GM12878 (cell line): ENCODE measurements at regions of chr17 and their contacts with region 1.

Region 1: GRCh38 chr17:31508288-31509094 is 117.0 kb downstream of the RAB11FIP4 start:
- DNase-seq: peak; percentile 69
- ATAC-seq: peak; percentile 86
- H3K4me3 ChIP-seq: peak overlapping the region; percentile 55
- H3K27ac ChIP-seq: peak overlapping the region; percentile 91
- H3K4me1 ChIP-seq: peaks cover 27% of the 10 kb centered on the region
- H3K27me3 ChIP-seq: no peaks in the 10 kb centered on the region
- CTCF ChIP-seq: peak; percentile 47 to 63 (median 61)
- EP300 ChIP-seq: no peak
- POLR2A ChIP-seq: peak; percentile 60
- RAD21 ChIP-seq: peak; percentile 60

Region 2: DNA sequence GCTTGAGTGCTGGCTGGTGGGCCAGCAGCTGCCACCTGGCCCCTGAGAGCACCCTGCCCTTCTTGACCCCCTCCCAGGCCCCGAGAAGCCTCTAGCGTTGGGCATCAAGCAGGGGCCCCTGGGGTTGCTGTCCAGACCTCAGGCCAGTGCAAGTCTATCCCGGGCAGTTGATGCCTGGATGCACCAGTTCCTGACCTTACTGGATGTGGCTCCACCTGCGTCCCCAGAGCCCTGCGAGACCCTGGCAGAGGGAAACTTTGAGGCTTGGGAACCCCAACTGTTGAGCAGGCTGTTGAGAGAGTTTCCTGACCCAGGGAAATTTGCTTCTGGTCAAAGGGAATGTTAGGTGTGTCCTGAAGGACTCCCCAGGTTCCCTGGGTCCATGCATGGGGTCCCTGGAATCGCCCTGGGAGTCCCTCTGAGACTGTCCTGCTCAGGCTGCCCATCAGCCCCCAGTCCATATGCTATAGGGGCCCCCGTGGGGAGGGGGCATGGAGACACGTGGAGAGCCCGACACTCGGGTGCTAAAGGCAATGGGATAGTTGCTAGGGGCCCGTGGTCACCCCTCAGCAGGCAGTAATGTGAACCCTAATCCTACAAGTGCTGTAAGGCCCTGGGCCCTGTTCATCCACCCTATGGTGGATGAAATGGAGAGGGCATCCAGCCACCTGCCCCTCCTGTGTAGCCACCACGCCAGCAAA is 70.6 kb before region 1 on chr17:
- CTCF ChIA-PET with region 1: interaction called, 15 read pairs
- POLR2A ChIA-PET with region 1: interaction called, 5 read pairs
- RAD21 ChIA-PET with region 1: interaction called, 7 read pairs
- SMC1A ChIA-PET with region 1: interaction called, 10 read pairs
- in situ Hi-C with region 1: no loop called
- intact Hi-C with region 1: no loop called
- DNase-seq: no peak
- ATAC-seq: no peak; the same call in 2 of the 3 replicates
- H3K4me3 ChIP-seq: no peak overlapping the region
- H3K27ac ChIP-seq: no peak overlapping the region
- H3K4me1 ChIP-seq: no peaks in the 10 kb centered on the region
- H3K27me3 ChIP-seq: no peaks in the 10 kb centered on the region
- CTCF ChIP-seq: no peak
- EP300 ChIP-seq: no peak
- POLR2A ChIP-seq: no peak
- RAD21 ChIP-seq: no peak

Region 3: DNA sequence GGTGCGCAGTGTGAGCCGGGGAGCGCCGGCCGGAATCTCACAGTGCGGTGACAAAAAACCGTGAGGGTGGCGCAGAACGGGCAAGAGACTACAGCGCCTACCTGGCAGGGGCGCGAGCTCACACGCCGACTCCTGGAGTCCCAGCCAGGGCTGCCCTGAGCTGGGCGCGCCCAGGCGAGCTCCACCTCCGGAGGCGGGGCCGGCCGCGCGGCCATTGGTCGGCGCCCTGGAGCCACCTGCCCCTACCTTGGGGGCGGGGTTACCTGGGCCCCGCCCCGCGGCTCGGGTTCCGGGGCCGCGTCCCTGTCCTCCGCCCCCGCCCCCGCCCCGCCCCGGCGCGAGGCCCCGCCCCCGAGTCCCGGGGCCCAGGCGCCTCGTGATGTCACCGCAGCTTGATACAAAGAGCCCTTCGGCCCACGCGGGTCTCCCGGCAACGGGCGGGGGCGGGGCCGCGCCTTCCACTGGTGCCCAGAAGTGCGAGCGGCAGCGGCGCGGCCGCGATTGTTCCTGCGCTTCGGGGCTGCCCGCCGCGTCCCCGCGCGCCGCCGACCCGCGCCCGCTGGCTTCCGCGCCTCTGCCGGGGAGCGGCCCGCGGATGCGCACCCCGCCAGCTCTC is 20.7 kb before region 1 on chr17:
- CTCF ChIA-PET with region 1: interaction called, 23 read pairs
- POLR2A ChIA-PET with region 1: interaction called, 30 read pairs
- RAD21 ChIA-PET with region 1: interaction called, 61 read pairs
- SMC1A ChIA-PET with region 1: interaction called, 60 read pairs
- in situ Hi-C with region 1: no loop called
- intact Hi-C with region 1: no loop called
- DNase-seq: no peak
- ATAC-seq: peak; percentile 80
- H3K4me3 ChIP-seq: peak overlapping the region; percentile 92
- H3K27ac ChIP-seq: no peak overlapping the region
- H3K4me1 ChIP-seq: peaks cover 40% of the 10 kb centered on the region
- H3K27me3 ChIP-seq: no peaks in the 10 kb centered on the region
- CTCF ChIP-seq: peak in 1 of 3 experiments; percentile 18; a peak in 1 of 6 replicates
- EP300 ChIP-seq: no peak
- POLR2A ChIP-seq: peak; percentile 73
- RAD21 ChIP-seq: 0 out of 2 replicates have a peak, but pooled peaks have one; percentile 4

Region 4: DNA sequence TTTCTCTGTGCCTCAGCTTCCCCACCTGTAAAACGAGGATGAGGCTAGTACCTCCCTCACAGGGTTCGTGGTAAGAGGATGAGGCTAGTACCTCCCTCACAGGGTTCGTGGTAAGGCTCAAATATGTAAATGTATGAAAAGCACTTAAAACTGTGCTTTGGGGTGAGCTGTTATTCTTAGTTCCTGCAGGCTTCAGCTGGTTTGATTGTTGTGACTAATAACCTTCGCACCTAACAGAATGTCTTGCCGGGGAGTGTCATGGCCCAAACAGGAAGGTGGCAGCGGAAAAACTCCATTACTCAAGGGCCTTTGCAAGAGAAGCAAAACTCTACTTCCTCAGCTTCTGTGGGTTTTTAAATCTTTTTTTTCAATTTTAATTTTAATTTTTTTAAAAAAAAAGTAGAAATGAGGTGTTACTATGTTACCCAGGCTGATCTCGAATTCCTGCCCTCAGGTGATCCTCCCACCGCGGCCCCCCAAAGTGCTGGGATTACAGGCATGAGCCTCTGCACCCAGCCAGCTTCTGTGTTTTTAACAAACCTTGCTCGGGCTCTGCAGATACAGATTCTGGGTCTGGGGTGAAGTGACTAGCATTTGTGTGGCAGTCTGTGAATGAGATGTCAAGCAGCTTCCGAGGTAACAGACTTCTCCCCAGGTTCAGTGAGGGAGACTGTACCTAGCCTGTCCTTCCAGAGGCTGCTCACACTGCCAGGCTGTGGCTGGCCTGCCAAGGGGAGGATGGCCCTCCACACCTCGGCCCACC is 14.1 kb before region 1 on chr17:
- CTCF ChIA-PET with region 1: interaction called, 23 read pairs
- POLR2A ChIA-PET with region 1: interaction called, 30 read pairs
- RAD21 ChIA-PET with region 1: interaction called, 61 read pairs
- SMC1A ChIA-PET with region 1: interaction called, 60 read pairs
- in situ Hi-C with region 1: no loop called
- intact Hi-C with region 1: loop called (anchors 1 kb)
- DNase-seq: peak; percentile 83
- ATAC-seq: peak; percentile 69
- H3K4me3 ChIP-seq: peak overlapping the region; percentile 56; the same call in 1 of the 2 replicates
- H3K27ac ChIP-seq: peak overlapping the region; percentile 92
- H3K4me1 ChIP-seq: peaks cover 65% of the 10 kb centered on the region
- H3K27me3 ChIP-seq: no peaks in the 10 kb centered on the region
- CTCF ChIP-seq: no peak
- EP300 ChIP-seq: peak; percentile 58 to 67; a peak in 3 of 4 replicates
- POLR2A ChIP-seq: peak; percentile 40; the same call in 1 of the 2 replicates
- RAD21 ChIP-seq: no peak